Adrenal gland (tissue), 19 donors: ENCODE measurements at regions of chr2 and their contacts with region 1.

Region 1: DNA sequence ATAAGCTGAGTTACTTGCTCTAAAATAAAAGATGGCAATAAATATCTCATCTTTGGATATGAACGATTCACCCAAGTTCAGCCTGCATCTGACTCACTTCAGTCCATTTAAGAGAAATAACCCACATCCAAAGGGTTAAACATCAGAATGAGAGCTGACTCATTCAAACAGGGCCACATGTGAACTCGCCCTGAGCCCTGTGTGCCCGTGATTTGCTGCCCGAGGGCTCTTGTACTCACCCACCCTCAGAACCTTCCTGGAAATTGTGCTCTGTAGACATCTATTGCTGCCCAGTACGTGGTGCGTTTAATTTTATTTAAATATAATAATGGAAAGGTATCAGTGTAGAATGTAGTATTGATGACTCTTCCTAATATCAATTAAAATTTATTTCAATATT is 66.9 kb upstream of the RBM44 start:
- DNase-seq: peak in 6 of 7 donors; percentile 57 to 85 (median 68)
- H3K4me3 ChIP-seq: no peak overlapping the region
- H3K27ac ChIP-seq: peak overlapping the region in 2 of 5 donors; percentile 21 to 87
- H3K4me1 ChIP-seq: peaks cover 30 to 71% of the 10 kb centered on the region in 2 donors
- H3K27me3 ChIP-seq: no peaks in the 10 kb centered on the region
- CTCF ChIP-seq: no peak
- POLR2A ChIP-seq: no peak

Region 2: DNA sequence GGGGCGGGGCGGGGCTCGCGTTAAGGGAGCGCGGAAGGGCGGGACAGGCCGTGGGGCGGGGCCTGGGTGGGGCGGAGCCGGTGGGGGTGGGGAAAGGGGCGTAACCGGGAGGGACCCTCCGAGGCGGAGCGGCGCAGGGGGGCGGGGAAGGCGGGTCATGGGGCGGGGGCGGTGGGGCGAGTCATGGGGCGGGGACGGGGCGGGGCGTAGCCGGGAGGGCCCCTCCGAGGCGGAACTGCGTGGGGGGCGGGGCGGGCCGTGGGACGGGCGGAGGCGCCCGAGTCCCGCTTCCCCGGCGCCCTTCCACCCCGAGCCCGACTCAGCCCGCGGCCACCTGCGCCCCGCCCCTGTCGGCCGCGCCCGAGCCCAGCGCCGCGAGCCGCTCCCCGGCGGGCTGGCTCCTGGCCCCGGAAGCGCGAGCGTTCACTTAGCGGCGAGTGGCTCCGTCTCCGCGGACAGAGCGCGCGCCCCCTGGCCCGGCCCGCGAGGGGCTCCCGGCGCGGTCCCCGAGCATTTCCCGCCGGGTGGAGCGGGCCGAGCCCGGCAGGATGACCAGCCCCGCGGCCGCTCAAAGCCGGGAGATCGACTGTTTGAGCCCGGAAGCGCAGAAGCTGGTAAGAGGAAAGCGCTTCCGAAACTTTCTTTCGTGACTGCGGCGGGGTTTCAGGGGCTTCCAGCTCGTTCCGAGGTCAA is 39.6 kb before region 1 on chr2:
- intact Hi-C with region 1: loop called in 1 of 2 experiments (anchors 5 kb)
- DNase-seq: peak; percentile 93 to 98 (median 97)
- H3K4me3 ChIP-seq: peak overlapping the region; percentile 53 to 85 (median 80)
- H3K27ac ChIP-seq: peak overlapping the region; percentile 46 to 94 (median 85)
- H3K4me1 ChIP-seq: peaks cover 20 to 70% of the 10 kb centered on the region in 2 donors
- H3K27me3 ChIP-seq: no peaks in the 10 kb centered on the region
- CTCF ChIP-seq: no peak
- POLR2A ChIP-seq: peak; percentile 42 to 69